ENCODE measurements at regions of chr11 and their contacts with region 1.

Region 1: DNA sequence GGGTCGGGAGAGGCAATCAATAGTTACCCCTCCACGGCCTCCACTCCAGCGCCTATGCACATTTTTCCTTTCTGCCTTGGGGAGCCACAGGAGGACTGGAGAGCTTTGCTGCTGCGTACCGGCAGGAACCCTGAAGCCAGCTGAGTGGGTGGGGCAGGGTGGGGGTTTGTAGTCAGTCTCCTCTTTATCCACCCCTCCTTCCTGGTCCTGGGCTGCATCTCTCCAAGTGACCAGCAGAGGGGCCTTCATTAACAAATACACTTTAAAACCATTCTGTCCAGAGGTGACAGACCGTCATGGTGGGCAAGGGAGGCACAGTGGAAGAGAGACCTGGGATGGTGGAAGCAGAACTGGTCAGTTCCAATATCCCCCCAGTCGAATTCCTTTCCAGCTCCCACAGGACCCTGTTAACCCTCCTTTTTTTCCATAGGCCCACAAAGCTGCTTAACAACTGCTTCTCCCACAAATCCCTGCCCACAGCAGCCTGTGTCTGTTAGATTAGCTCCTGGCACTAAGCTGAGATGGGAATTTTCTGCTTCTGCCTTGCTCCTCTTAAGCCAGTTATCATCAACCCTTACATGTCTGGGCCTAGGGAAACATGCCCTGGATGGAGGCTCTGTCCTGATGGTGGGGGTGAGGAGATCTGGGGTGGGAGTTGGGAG is 3.9 kb upstream of the ABCG4 start:
- DNase-seq: peak; percentile 42
- H3K4me3 ChIP-seq: no peak overlapping the region
- H3K27ac ChIP-seq: no peak overlapping the region
- H3K4me1 ChIP-seq: peaks cover 10% of the 10 kb centered on the region
- H3K27me3 ChIP-seq: no peaks in the 10 kb centered on the region
- CTCF ChIP-seq: peak; percentile 51 to 67

Region 2: DNA sequence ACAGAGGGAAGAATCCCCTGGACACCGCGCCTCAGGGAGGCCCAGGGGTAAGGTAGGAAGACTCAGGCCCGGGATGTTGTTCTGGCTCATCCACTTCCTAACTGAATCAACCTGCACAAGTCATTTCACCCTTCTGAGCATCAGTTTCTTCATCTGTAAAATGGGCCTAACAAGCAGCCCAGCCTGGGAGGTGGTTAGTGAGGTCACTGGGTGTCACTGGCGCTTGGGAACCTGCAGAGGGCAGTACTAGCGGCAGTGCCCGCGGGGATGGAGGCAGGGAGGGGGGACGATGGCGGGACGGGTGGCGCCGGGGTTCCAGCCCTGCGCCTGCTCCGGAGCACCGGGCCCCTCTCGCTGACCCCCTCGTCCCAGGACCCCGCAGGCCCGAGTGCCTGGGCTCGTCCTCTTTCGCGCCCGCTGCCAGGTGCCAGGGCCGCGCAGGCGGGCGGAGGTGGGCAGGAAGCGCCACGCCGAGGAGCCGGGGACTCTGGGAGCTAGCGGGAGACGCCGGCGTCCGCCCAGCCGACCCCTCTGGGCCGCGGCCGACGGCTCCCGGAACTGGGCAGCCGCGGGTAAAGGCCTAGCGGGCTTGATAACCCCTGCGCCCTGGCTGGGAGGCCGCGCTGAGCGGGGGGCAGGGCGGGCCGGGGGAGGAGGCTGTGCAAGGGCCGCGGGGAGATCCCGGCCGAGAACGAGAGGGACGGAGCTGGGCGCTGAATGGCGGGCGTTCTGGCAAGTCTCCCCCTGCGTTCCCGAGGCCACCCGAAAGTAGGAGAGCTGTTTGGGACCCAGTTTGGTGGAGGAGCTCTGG is 23.7 kb after region 1 on chr11 and contains the start of gene NLRX1:
- CTCF ChIA-PET with region 1: no interaction called
- dilution Hi-C with region 1: no loop called
- in situ Hi-C with region 1: no loop called
- intact Hi-C with region 1: loop called (anchors 2 kb)
- DNase-seq: peak; percentile 66
- H3K4me3 ChIP-seq: peak within 1 kb of the TSS; percentile 59 to 68 (median 66)
- H3K27ac ChIP-seq: peak within 1 kb of the TSS; percentile 84
- H3K4me1 ChIP-seq: peaks cover 35% of the 10 kb centered on the region
- H3K27me3 ChIP-seq: no peaks in the 10 kb centered on the region
- CTCF ChIP-seq: peak; percentile 83 to 93
- total RNA-seq, gene NLRX1: 13.5 to 15.5 TPM

Region 3: DNA sequence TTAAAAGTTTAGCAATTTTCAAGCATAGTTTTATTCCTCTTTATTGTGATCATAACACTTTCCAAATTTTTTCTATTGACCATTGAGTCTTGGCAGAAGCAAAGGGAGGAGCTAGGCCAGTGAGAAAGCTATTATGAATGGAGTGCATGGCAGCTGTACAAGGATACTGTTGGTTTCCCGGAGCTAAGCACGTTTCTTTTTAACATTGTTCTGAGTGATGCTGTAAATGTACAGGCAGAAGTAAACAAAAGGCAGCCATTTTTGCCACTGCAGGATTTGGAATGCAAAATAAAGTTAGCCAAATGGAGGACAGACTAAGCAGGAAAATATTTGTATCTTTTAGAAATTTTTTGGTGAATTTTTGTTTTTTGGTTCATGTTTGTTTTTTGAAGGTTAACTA is 77.4 kb after region 1 on chr11:
- CTCF ChIA-PET with region 1: no interaction called
- dilution Hi-C with region 1: no loop called
- in situ Hi-C with region 1: no loop called
- intact Hi-C with region 1: no loop called
- DNase-seq: no peak
- H3K4me3 ChIP-seq: no peak overlapping the region
- H3K27ac ChIP-seq: no peak overlapping the region
- H3K4me1 ChIP-seq: peaks cover 26% of the 10 kb centered on the region
- H3K27me3 ChIP-seq: no peaks in the 10 kb centered on the region
- CTCF ChIP-seq: no peak

Region 4: DNA sequence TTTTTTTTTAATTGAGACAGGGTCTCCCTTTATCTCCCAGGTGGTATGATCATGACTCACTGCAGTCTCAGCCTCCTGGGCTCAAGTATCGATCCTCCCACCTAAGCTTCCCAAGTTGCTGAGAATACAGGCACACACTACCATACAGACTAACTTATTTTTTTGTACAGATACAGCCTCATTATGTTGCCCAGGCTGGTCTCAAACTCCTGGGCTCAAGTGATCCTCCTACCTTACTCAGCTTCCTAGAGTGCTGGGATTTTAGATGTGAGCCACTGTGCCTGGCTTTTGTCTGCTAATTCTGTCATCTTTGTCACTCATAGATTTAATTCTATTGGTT is 104.7 kb after region 1 on chr11:
- CTCF ChIA-PET with region 1: interaction called, 12 read pairs
- dilution Hi-C with region 1: loop called (anchors 10 kb)
- in situ Hi-C with region 1: no loop called
- intact Hi-C with region 1: no loop called
- DNase-seq: no peak
- H3K4me3 ChIP-seq: no peak overlapping the region
- H3K27ac ChIP-seq: no peak overlapping the region
- H3K4me1 ChIP-seq: no peaks in the 10 kb centered on the region
- H3K27me3 ChIP-seq: no peaks in the 10 kb centered on the region
- CTCF ChIP-seq: no peak

Region 5: DNA sequence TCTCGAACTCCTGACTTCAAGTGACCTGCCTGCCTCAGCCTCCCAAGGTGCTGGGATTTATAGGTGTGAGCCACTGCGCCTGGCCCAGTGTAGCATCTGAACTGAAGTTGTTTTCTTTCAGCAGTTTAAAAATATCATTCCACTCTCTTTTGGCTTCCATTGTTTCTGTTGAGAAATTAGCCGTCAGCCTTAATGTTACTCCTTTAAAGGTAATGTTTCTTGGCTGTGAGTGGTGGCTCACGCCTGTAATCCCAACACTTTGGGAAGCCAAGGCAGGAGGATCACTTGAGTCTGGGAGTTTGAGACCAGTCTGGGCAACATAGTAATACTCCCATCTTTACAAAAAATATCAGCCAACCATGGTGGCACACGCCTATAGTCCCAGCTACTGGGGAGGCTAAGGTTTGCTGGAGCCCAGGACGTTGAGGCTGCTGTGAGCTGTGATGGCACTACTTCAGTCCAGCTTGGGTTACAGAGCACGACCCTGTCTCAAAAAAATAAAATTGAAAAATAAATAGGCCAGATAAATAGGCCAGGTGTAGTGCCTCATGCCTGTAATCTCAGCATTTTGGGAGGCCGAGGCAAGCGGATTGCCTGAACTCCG is 146.0 kb after region 1 on chr11:
- CTCF ChIA-PET with region 1: interaction called, 14 read pairs
- dilution Hi-C with region 1: no loop called
- in situ Hi-C with region 1: no loop called
- intact Hi-C with region 1: loop called (anchors 10 kb)
- DNase-seq: no peak
- H3K4me3 ChIP-seq: no peak overlapping the region
- H3K27ac ChIP-seq: no peak overlapping the region
- H3K4me1 ChIP-seq: no peaks in the 10 kb centered on the region
- H3K27me3 ChIP-seq: no peaks in the 10 kb centered on the region
- CTCF ChIP-seq: no peak

Region 6: DNA sequence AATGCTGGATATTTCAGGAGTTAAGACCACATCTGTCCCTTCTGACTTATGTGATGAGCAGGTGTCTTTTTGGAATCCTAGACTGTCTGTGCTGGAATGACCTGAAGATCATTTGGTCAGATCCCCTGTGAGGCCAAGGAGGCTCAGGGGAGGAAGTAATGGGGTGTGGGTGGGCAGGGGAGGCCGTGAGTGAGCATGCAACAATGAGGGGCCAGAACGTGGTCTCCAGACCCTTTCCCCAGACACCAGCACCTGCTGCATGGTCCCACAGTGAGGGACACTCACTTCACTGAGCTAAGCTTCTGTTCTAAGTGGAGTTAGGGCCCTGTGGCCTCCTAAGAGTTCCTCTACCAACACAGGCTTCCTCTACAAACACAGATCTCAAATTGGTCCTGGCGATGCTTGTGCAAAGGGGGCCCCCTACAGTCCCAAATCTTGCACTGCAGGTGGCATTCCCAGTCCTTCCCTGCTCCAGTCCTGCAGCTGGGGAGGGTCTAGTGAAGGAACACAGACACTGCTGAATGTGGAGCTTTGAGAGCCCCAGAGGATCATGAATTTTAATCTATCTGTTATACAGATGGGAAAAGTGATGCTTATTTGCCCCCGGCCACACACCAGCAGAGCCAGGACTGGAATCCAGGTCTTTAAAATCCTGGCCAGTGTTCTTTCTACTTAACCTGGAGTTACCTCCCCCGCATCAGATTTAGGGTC is 229.1 kb after region 1 on chr11:
- CTCF ChIA-PET with region 1: interaction called, 3 read pairs
- dilution Hi-C with region 1: no loop called
- in situ Hi-C with region 1: no loop called
- intact Hi-C with region 1: loop called (anchors 1 kb)
- DNase-seq: peak; percentile 54
- H3K4me3 ChIP-seq: no peak overlapping the region
- H3K27ac ChIP-seq: no peak overlapping the region
- H3K4me1 ChIP-seq: peaks cover 42% of the 10 kb centered on the region
- H3K27me3 ChIP-seq: no peaks in the 10 kb centered on the region
- CTCF ChIP-seq: peak; percentile 94 to 96

Measured in mammary epithelial cell (primary cell).